PC-3 (cell line): ENCODE measurements at regions of chrX and their contacts with region 1.

Region 1: GRCh38 chrX:4570151-4570550 is 856.7 kb upstream of the PRKX start:
- DNase-seq: peak; percentile 65
- ATAC-seq: peak; percentile 79
- H3K4me3 ChIP-seq: no peak overlapping the region
- H3K27ac ChIP-seq: no peak overlapping the region
- H3K4me1 ChIP-seq: no peaks in the 10 kb centered on the region; the same call in 1 of the 2 replicates
- H3K27me3 ChIP-seq: no peaks in the 10 kb centered on the region
- CTCF ChIP-seq: no peak

Region 2: GRCh38 chrX:4663085-4663484 is 92.9 kb after region 1 on chrX:
- CTCF ChIA-PET with region 1: no interaction called
- POLR2A ChIA-PET with region 1: no interaction called
- intact Hi-C with region 1: loop called (anchors 5 kb)
- DNase-seq: no peak
- ATAC-seq: no peak
- H3K4me3 ChIP-seq: no peak overlapping the region
- H3K27ac ChIP-seq: no peak overlapping the region
- H3K4me1 ChIP-seq: peaks cover 11% of the 10 kb centered on the region
- H3K27me3 ChIP-seq: no peaks in the 10 kb centered on the region
- CTCF ChIP-seq: no peak